ENCODE measurements at regions of chr6 and their contacts with region 1.

Region 1: GRCh38 chr6:43667245-43668150 is 20.1 kb downstream of the MRPS18A start:
- DNase-seq: peak; percentile 72 to 85 (median 77)
- ATAC-seq: peak; percentile 83
- H3K4me3 ChIP-seq: no peak overlapping the region
- H3K4me3 Mint-ChIP-seq: peak overlapping the region; percentile 63
- H3K27ac ChIP-seq: no peak overlapping the region
- H3K27ac Mint-ChIP-seq: peak overlapping the region; percentile 81
- H3K4me1 ChIP-seq: peaks cover 14% of the 10 kb centered on the region
- H3K4me1 Mint-ChIP-seq: peaks cover 18% of the 10 kb centered on the region
- H3K27me3 ChIP-seq: no peaks in the 10 kb centered on the region
- H3K27me3 Mint-ChIP-seq: no peaks in the 10 kb centered on the region
- CTCF ChIP-seq: peak; percentile 96

Region 2: GRCh38 chr6:43584892-43585570 is 82.5 kb before region 1 on chr6:
- CTCF ChIA-PET with region 1: no interaction called
- POLR2A ChIA-PET with region 1: no interaction called
- intact Hi-C with region 1: no loop called
- DNase-seq: peak in 5 of 9 experiments; percentile 9 to 52 (median 31)
- ATAC-seq: peak; percentile 36
- H3K4me3 ChIP-seq: no peak overlapping the region
- H3K4me3 Mint-ChIP-seq: peak overlapping the region; percentile 51
- H3K27ac ChIP-seq: peak overlapping the region; percentile 27 to 62
- H3K27ac Mint-ChIP-seq: peak overlapping the region; percentile 81
- H3K4me1 ChIP-seq: peaks cover 22% of the 10 kb centered on the region
- H3K4me1 Mint-ChIP-seq: peaks cover 27% of the 10 kb centered on the region
- H3K27me3 ChIP-seq: no peaks in the 10 kb centered on the region
- H3K27me3 Mint-ChIP-seq: no peaks in the 10 kb centered on the region
- CTCF ChIP-seq: no peak

Region 3: GRCh38 chr6:43608310-43608763 is 59.2 kb before region 1 on chr6:
- CTCF ChIA-PET with region 1: interaction called, 14 read pairs
- POLR2A ChIA-PET with region 1: no interaction called
- intact Hi-C with region 1: no loop called
- DNase-seq: peak; percentile 23 to 75 (median 61)
- ATAC-seq: peak; percentile 38
- H3K4me3 ChIP-seq: no peak overlapping the region
- H3K4me3 Mint-ChIP-seq: no peak overlapping the region
- H3K27ac ChIP-seq: no peak overlapping the region
- H3K27ac Mint-ChIP-seq: no peak overlapping the region
- H3K4me1 ChIP-seq: no peaks in the 10 kb centered on the region
- H3K4me1 Mint-ChIP-seq: peaks cover 3% of the 10 kb centered on the region
- H3K27me3 ChIP-seq: no peaks in the 10 kb centered on the region
- H3K27me3 Mint-ChIP-seq: no peaks in the 10 kb centered on the region
- CTCF ChIP-seq: peak; percentile 63

Region 4: GRCh38 chr6:43657221-43657802 is 10.2 kb before region 1 on chr6:
- CTCF ChIA-PET with region 1: interaction called, 10 read pairs
- POLR2A ChIA-PET with region 1: no interaction called
- intact Hi-C with region 1: no loop called
- DNase-seq: no peak
- ATAC-seq: no peak
- H3K4me3 ChIP-seq: no peak overlapping the region
- H3K4me3 Mint-ChIP-seq: no peak overlapping the region
- H3K27ac ChIP-seq: no peak overlapping the region
- H3K27ac Mint-ChIP-seq: no peak overlapping the region
- H3K4me1 ChIP-seq: no peaks in the 10 kb centered on the region
- H3K4me1 Mint-ChIP-seq: no peaks in the 10 kb centered on the region
- H3K27me3 ChIP-seq: no peaks in the 10 kb centered on the region
- H3K27me3 Mint-ChIP-seq: peaks cover 2% of the 10 kb centered on the region
- CTCF ChIP-seq: no peak

Region 5: GRCh38 chr6:43680308-43681200 is 13.1 kb after region 1 on chr6:
- CTCF ChIA-PET with region 1: interaction called, 25 read pairs
- POLR2A ChIA-PET with region 1: interaction called, 3 read pairs
- intact Hi-C with region 1: no loop called
- DNase-seq: no peak
- ATAC-seq: no peak
- H3K4me3 ChIP-seq: no peak overlapping the region
- H3K4me3 Mint-ChIP-seq: no peak overlapping the region
- H3K27ac ChIP-seq: no peak overlapping the region
- H3K27ac Mint-ChIP-seq: no peak overlapping the region
- H3K4me1 ChIP-seq: peaks cover under 1% of the 10 kb centered on the region
- H3K4me1 Mint-ChIP-seq: peaks cover 32% of the 10 kb centered on the region
- H3K27me3 ChIP-seq: no peaks in the 10 kb centered on the region
- H3K27me3 Mint-ChIP-seq: no peaks in the 10 kb centered on the region
- CTCF ChIP-seq: no peak

Region 6: DNA sequence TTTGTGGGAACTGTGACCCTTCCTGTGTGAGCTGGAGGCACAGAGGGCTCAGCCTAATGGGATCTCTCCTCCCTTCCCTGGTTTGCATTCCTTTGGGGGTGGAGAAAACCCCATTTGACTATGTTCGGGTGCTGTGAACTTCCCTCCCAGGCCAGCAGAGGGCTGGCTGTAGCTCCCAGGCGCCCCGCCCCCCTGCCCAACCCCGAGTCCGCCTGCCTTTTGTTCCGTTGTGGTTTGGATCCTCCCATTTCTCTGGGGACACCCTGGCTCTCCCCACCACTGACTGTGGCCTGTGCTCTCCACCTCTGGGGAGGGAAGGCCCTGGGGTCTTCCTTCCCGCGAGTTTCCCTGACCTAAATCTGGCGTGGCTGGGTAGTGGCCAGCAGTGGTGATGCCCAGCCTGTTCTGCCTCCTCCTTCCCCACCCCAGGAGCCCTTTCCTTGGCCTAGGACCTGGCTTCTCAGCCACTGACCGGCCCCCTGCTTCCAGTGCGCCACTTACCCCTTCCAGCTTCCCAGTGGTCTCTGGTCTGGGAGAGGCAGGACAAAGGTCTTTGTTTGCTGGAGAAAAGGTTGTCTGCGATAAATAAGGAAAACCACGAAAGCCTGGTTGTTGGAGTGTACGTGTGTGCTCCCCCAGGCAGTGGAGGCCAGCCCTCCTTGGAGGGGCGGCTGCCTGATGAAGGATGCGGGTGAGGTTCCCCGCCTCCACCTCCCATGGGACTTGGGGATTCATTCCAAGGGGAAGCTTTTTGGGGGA is 107.5 kb after region 1 on chr6:
- CTCF ChIA-PET with region 1: interaction called, 25 read pairs
- POLR2A ChIA-PET with region 1: no interaction called
- intact Hi-C with region 1: loop called (anchors 1 to 2 kb)
- DNase-seq: peak in 8 of 9 experiments; percentile 27 to 76 (median 56)
- ATAC-seq: peak; percentile 24
- H3K4me3 ChIP-seq: no peak overlapping the region
- H3K4me3 Mint-ChIP-seq: no peak overlapping the region
- H3K27ac ChIP-seq: no peak overlapping the region
- H3K27ac Mint-ChIP-seq: no peak overlapping the region
- H3K4me1 ChIP-seq: peaks cover 9% of the 10 kb centered on the region
- H3K4me1 Mint-ChIP-seq: peaks cover 12% of the 10 kb centered on the region
- H3K27me3 ChIP-seq: peaks cover 0 to 20% of the 10 kb centered on the region in 2 experiments
- H3K27me3 Mint-ChIP-seq: peaks cover 25% of the 10 kb centered on the region
- CTCF ChIP-seq: peak; percentile 70

Region 7: DNA sequence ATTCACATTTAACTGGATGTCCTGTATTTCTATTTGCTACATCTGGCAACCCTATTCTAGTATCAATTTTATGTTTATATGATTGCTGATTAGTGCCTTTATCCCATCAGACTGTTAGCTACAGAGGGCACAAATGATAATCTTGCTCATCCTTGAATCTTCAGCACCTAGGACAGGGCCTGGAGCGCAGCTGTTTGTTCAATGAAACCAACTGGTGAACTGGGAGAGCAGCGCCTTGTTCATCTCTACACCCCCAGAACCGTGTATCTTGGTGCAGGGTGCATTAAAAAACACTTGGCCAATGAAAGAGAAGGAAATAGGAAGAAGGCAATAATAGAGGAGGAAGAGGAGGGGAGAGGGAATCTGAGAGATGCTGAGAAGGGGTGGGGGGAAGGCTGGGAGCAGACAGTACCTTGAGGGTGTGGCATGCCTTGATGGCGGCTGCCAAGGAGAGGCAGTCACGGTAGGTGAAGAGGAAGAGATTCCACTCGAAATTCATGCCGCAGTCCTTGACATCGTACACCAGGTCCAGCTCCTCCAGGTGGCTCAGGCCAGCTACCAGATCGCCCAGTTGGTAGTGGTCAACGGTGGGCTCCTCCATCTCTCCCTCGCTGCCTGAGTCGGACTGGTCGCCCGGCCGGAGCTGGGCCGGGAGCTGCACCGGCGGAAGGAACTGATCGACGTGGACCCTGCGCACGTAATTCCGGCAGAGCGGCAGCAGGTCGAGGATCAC is 618.2 kb after region 1 on chr6:
- CTCF ChIA-PET with region 1: no interaction called
- POLR2A ChIA-PET with region 1: no interaction called
- intact Hi-C with region 1: no loop called
- DNase-seq: no peak
- ATAC-seq: no peak
- H3K4me3 ChIP-seq: no peak overlapping the region
- H3K4me3 Mint-ChIP-seq: no peak overlapping the region
- H3K27ac ChIP-seq: no peak overlapping the region
- H3K27ac Mint-ChIP-seq: no peak overlapping the region
- H3K4me1 ChIP-seq: no peaks in the 10 kb centered on the region
- H3K4me1 Mint-ChIP-seq: no peaks in the 10 kb centered on the region
- H3K27me3 ChIP-seq: peaks cover 8 to 9% of the 10 kb centered on the region in 2 experiments
- H3K27me3 Mint-ChIP-seq: peaks cover 64% of the 10 kb centered on the region
- CTCF ChIP-seq: no peak

Measured in CD8-positive, alpha-beta T cell (primary cell).